Endothelial cell of umbilical vein (primary cell): ENCODE measurements at regions of chr5 and their contacts with region 1.

Region 1: DNA sequence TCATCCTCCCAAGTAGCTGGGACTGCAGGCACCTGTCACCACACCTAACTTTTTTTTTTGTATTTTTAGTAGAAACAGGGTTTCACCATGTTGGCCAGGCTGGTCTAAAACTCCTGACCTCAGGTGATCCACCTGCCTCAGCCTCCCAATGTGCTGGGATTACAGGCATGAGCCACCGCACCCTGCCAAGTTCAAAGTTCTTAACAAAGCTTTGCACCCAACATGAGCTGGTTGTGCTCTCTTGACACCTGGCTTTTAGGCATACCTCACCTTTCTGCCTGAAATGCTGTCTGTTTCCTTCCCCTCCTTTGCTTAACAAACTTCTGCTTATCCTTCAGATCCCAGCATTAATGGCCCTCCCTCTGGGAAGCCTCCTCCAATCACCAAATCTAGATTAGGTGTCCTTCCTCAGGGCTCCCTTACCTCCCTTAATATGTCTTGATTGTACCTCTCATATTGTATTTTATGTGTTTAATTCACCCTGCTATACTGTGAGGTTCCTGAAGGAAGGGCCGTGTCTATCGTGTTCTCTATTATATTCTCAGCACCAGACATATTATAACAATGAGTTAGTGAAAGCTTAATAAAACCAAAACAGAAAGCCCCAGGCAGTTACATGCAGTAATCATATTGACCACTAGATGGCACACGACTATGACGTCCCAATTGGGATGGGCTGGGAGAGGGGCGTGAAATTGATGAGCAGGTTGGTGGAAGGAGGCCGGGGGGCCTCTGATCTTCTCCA is 62.9 kb upstream of the PPARGC1B start:
- DNase-seq: peak; percentile 42
- H3K4me3 ChIP-seq: no peak overlapping the region
- H3K27ac ChIP-seq: no peak overlapping the region
- H3K4me1 ChIP-seq: no peaks in the 10 kb centered on the region
- H3K27me3 ChIP-seq: peaks cover 3 to 4% of the 10 kb centered on the region in 2 experiments
- CTCF ChIP-seq: peak; percentile 78 to 89
- POLR2A ChIP-seq: no peak

Region 2: DNA sequence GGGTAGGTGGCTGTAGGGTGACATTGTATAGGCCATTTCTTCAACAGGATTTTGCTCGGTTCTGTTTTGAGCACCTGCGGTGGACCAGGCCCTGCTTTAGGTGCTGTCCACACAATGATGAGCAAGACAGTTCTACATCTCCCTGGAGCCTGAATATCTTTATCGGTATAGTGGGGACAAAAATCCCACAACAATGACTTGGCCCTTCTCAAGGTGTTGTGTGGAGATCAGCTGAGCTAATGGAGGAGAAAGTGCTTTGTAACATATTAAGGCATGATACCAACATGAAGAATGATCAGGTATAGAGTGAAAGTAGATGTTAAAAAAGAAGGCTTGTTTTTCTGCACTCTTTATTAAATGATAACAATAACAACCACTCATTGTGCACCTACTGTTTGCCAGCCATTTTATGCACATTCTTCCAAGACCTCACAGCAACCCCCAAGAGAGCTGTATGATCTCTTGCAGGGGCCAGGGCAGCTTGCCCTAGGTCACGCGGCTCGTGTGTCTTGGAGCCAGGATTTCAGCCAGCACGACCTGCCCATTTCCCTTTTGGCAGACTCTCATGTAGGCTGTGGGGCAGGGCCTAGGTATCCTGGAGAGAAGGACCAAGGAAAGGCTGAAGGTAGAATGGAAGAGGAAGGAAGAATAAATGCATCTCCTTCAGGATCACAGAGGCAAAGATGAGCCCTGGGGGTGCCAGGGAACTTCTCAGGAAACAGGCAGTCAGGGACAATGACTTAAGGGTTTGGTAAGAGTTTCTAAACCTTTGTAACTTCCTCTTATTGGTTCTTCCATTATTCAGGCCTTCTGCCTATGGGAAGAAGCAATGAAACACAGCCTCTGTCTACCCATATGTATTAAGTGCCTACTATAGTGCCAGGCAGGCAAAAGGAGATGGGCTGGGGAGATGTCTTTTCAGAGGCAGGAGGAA is 12.9 kb after region 1 on chr5:
- CTCF ChIA-PET with region 1: interaction called, 38 read pairs
- POLR2A ChIA-PET with region 1: no interaction called
- dilution Hi-C with region 1: no loop called
- intact Hi-C with region 1: no loop called
- DNase-seq: no peak
- H3K4me3 ChIP-seq: no peak overlapping the region
- H3K27ac ChIP-seq: no peak overlapping the region
- H3K4me1 ChIP-seq: no peaks in the 10 kb centered on the region
- H3K27me3 ChIP-seq: peaks cover 13 to 33% of the 10 kb centered on the region in 2 experiments
- CTCF ChIP-seq: no peak
- POLR2A ChIP-seq: no peak

Region 3: GRCh38 chr5:149731639-149732323 is 64.5 kb after region 1 on chr5:
- CTCF ChIA-PET with region 1: interaction called, 18 read pairs
- POLR2A ChIA-PET with region 1: no interaction called
- dilution Hi-C with region 1: no loop called
- intact Hi-C with region 1: loop called (anchors 2 kb)
- DNase-seq: peak; percentile 63
- H3K4me3 ChIP-seq: peak overlapping the region; percentile 2 to 83 (median 53)
- H3K27ac ChIP-seq: no peak overlapping the region
- H3K4me1 ChIP-seq: peaks cover 9% of the 10 kb centered on the region
- H3K27me3 ChIP-seq: no peaks in the 10 kb centered on the region
- CTCF ChIP-seq: no peak
- POLR2A ChIP-seq: no peak

Region 4: DNA sequence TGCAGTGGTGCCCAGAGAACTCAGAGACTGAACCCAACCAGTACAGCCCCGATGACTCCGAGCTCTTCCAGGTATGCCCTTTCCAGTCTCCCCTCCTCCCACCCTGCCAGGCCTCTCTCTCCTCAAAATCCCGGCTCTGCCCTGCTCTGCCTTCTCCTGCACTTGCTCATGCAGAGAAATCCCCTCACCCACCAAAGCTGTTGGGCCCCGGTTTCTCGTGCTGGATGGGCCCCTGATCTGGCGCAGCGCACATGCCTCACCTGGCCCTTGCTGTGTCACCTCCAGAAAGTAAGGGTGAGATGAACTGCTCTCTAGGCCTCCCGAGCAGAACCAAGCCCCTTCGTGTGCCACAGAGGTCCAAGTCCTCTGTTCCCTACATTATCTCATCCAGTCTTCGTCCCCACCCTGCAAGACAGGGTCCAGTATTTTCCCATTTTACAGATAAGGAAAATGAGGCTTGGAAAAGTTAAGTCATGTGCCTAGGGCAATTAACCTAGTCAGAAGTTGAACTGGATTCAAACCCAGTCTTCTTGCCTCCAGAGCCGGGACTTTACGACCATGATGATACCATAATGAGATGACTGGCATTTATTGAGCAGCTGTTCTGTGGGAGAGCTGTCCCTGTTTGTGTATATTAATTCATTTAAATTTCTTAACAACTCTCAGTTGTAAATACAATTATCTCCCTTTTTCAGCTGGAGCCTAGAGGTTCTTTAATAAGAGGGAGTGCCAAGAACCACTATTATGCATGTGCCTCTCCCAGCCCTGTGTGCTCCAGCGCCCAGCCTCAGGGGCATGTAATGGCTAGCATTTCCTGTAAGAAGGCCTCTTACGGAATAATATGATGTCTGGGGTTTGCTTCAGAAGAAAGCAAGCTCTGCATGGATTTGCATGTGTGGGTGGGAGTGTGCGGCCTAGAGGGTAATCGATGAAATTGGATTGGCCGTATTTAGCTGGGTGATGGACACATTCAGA is 153.6 kb after region 1 on chr5:
- CTCF ChIA-PET with region 1: interaction called, 240 read pairs
- POLR2A ChIA-PET with region 1: no interaction called
- dilution Hi-C with region 1: no loop called
- intact Hi-C with region 1: no loop called
- DNase-seq: no peak
- H3K4me3 ChIP-seq: no peak overlapping the region
- H3K27ac ChIP-seq: no peak overlapping the region
- H3K4me1 ChIP-seq: no peaks in the 10 kb centered on the region
- H3K27me3 ChIP-seq: no peaks in the 10 kb centered on the region
- CTCF ChIP-seq: no peak
- POLR2A ChIP-seq: no peak

Region 5: GRCh38 chr5:149852641-149853330 is 185.5 kb after region 1 on chr5:
- CTCF ChIA-PET with region 1: interaction called, 12 read pairs
- POLR2A ChIA-PET with region 1: no interaction called
- dilution Hi-C with region 1: no loop called
- intact Hi-C with region 1: no loop called
- DNase-seq: peak; percentile 75
- H3K4me3 ChIP-seq: no peak overlapping the region
- H3K27ac ChIP-seq: no peak overlapping the region
- H3K4me1 ChIP-seq: peaks cover 7% of the 10 kb centered on the region
- H3K27me3 ChIP-seq: no peaks in the 10 kb centered on the region
- CTCF ChIP-seq: peak; percentile 89 to 98
- POLR2A ChIP-seq: no peak

Region 6: DNA sequence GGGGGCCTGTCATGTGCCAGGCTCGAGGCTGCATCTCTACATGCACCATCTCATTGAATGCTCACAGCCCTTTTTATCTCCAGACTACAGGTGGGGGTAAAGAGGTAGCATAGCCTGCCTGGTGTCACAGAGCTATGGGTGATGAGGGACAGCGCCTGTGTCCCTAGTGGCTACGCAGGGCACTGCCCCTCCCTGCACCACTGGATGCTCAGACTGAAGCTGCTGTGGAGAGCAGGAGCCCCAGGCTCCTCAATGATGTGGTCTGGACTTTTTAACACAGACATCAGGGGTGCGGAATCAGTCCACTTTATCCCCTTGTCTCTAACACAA is 619.6 kb after region 1 on chr5:
- CTCF ChIA-PET with region 1: no interaction called
- POLR2A ChIA-PET with region 1: no interaction called
- dilution Hi-C with region 1: no loop called
- intact Hi-C with region 1: no loop called
- DNase-seq: no peak
- H3K4me3 ChIP-seq: no peak overlapping the region
- H3K27ac ChIP-seq: no peak overlapping the region
- H3K4me1 ChIP-seq: no peaks in the 10 kb centered on the region
- H3K27me3 ChIP-seq: peaks cover 0 to 23% of the 10 kb centered on the region in 2 experiments
- CTCF ChIP-seq: peak; percentile 16 to 35
- POLR2A ChIP-seq: no peak